Transverse colon (tissue), 4 donors: ENCODE measurements at regions of chr13 and their contacts with region 1.

Region 1: GRCh38 chr13:24220086-24220703 is 59.7 kb downstream of the SPATA13 start:
- DNase-seq: peak; percentile 59
- H3K4me3 ChIP-seq: no peak overlapping the region
- H3K27ac ChIP-seq: peak overlapping the region; percentile 23 to 43 (median 28)
- H3K4me1 ChIP-seq: peaks cover 18 to 44% (median 30%) of the 10 kb centered on the region in 4 donors
- H3K27me3 ChIP-seq: no peaks in the 10 kb centered on the region
- CTCF ChIP-seq: peak; percentile 68 to 88 (median 77)
- EP300 ChIP-seq: no peak
- POLR2A ChIP-seq: no peak

Region 2: DNA sequence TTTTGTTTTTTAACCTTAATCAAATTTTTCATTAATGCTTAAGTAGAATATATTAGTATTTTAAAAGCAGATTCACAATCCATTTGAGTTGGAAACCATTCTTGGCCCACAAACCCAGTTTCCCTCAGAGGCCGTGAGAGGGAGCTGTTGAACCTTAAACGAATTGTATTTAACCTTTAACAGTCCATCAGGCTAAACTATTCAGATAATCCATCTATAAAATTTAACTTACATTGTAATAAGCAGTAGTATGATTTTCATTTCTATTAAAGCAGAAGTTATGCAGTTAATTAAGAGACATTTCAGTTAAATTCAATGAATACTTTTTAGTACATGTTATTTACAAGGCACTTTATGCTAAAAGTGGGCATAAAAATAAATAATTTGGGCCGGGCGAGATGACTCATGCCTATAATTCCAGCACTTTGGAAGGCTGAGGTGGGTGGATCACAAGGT is 199.8 kb before region 1 on chr13:
- in situ Hi-C with region 1: loop called in 3 of 4 experiments (anchors 10 to 25 kb)
- intact Hi-C with region 1: loop called (anchors 5 kb)
- DNase-seq: peak; percentile 55
- H3K4me3 ChIP-seq: no peak overlapping the region
- H3K27ac ChIP-seq: no peak overlapping the region
- H3K4me1 ChIP-seq: no peaks in the 10 kb centered on the region
- H3K27me3 ChIP-seq: no peaks in the 10 kb centered on the region
- CTCF ChIP-seq: peak; percentile 65 to 82 (median 70)
- EP300 ChIP-seq: no peak
- POLR2A ChIP-seq: no peak

Region 3: GRCh38 chr13:24053519-24054251 is 166.5 kb before region 1 on chr13:
- in situ Hi-C with region 1: loop called in 3 of 4 experiments (anchors 5 to 10 kb)
- intact Hi-C with region 1: no loop called
- DNase-seq: peak; percentile 72
- H3K4me3 ChIP-seq: no peak overlapping the region
- H3K27ac ChIP-seq: peak overlapping the region; percentile 27 to 75 (median 56)
- H3K4me1 ChIP-seq: peaks cover 5 to 21% (median 14%) of the 10 kb centered on the region in 4 donors
- H3K27me3 ChIP-seq: no peaks in the 10 kb centered on the region
- CTCF ChIP-seq: peak; percentile 69 to 84 (median 70)
- EP300 ChIP-seq: no peak
- POLR2A ChIP-seq: no peak

Region 4: DNA sequence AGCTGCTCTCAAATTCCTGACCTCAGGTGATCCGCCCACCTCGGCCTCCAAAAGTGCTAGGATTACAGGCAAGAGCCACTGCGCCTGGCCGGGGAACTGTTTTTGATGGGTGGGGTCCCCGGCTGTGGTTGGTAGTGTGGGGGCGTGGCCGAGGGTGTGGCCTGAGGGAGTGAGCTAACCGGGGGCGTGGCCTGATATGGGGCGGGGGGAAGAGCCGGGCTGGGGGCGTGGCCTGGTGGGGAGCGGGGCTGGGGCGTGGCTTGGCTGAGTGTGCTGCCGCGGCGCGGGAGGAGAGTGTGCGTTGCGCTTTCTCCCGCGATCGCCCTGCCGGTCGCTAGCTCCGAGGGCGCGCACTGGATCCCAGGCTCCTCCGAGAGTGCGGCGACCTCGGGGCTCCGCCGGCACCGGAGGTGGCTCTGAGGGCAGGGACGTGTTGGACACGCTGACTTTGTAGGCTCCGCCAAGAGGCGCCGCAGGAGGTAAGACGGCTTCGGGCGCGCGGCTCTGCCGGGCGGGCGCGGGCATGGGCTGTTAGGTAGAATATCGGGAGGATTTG is 59.7 kb before region 1 on chr13 and contains the start of gene SPATA13:
- in situ Hi-C with region 1: no loop called
- intact Hi-C with region 1: loop called (anchors 10 kb)
- DNase-seq: peak; percentile 98
- H3K4me3 ChIP-seq: peak within 1 kb of the TSS; percentile 50 to 89 (median 73)
- H3K27ac ChIP-seq: peak within 1 kb of the TSS; percentile 81 to 93 (median 88)
- H3K4me1 ChIP-seq: peaks cover 4 to 36% (median 20%) of the 10 kb centered on the region in 4 donors
- H3K27me3 ChIP-seq: no peaks in the 10 kb centered on the region
- CTCF ChIP-seq: no peak
- EP300 ChIP-seq: no peak
- POLR2A ChIP-seq: peak; percentile 94
- total RNA-seq, gene SPATA13: 85.1 to 612 (median 228) TPM